ENCODE measurements at regions of chr16 and their contacts with region 1.

Region 1: GRCh38 chr16:75074920-75075687 is 41.5 kb downstream of the LDHD start:
- DNase-seq: peak; percentile 43 to 86 (median 78)
- ATAC-seq: peak; percentile 99
- H3K4me3 Mint-ChIP-seq: peak overlapping the region; percentile 59 to 82 (median 73)
- H3K27ac Mint-ChIP-seq: peak overlapping the region; percentile 66 to 93 (median 82)
- H3K4me1 Mint-ChIP-seq: peaks cover 18 to 62% (median 50%) of the 10 kb centered on the region in 4 donors
- H3K27me3 Mint-ChIP-seq: peaks cover 0 to 3% (median 0%) of the 10 kb centered on the region in 5 donors

Region 2: GRCh38 chr16:75064403-75065148 is 10.5 kb before region 1 on chr16:
- POLR2A ChIA-PET with region 1: interaction called, 11 read pairs
- DNase-seq: peak in 3 of 10 donors; percentile 12 to 23 (median 15)
- ATAC-seq: peak; percentile 56 to 65
- H3K4me3 Mint-ChIP-seq: peak overlapping the region; percentile 43 to 84 (median 72)
- H3K27ac Mint-ChIP-seq: peak overlapping the region in 8 of 10 donors; percentile 77 to 90 (median 84)
- H3K4me1 Mint-ChIP-seq: peaks cover 13 to 52% (median 29%) of the 10 kb centered on the region in 4 donors
- H3K27me3 Mint-ChIP-seq: peaks cover 0 to 3% (median 0%) of the 10 kb centered on the region in 5 donors

Region 3: GRCh38 chr16:75092782-75093185 is 17.7 kb after region 1 on chr16:
- POLR2A ChIA-PET with region 1: no interaction called
- DNase-seq: no peak
- ATAC-seq: no peak
- H3K4me3 Mint-ChIP-seq: no peak overlapping the region
- H3K27ac Mint-ChIP-seq: no peak overlapping the region
- H3K4me1 Mint-ChIP-seq: peaks cover under 1 to 7% (median 6%) of the 10 kb centered on the region in 4 donors
- H3K27me3 Mint-ChIP-seq: peaks cover 0 to 2% (median 0%) of the 10 kb centered on the region in 5 donors

Region 4: GRCh38 chr16:75130150-75130771 is 55.2 kb after region 1 on chr16:
- POLR2A ChIA-PET with region 1: no interaction called
- DNase-seq: no peak
- ATAC-seq: no peak
- H3K4me3 Mint-ChIP-seq: no peak overlapping the region
- H3K27ac Mint-ChIP-seq: no peak overlapping the region
- H3K4me1 Mint-ChIP-seq: peaks cover 3 to 13% (median 12%) of the 10 kb centered on the region in 4 donors
- H3K27me3 Mint-ChIP-seq: peaks cover 4 to 15% (median 8%) of the 10 kb centered on the region in 5 donors

Region 5: DNA sequence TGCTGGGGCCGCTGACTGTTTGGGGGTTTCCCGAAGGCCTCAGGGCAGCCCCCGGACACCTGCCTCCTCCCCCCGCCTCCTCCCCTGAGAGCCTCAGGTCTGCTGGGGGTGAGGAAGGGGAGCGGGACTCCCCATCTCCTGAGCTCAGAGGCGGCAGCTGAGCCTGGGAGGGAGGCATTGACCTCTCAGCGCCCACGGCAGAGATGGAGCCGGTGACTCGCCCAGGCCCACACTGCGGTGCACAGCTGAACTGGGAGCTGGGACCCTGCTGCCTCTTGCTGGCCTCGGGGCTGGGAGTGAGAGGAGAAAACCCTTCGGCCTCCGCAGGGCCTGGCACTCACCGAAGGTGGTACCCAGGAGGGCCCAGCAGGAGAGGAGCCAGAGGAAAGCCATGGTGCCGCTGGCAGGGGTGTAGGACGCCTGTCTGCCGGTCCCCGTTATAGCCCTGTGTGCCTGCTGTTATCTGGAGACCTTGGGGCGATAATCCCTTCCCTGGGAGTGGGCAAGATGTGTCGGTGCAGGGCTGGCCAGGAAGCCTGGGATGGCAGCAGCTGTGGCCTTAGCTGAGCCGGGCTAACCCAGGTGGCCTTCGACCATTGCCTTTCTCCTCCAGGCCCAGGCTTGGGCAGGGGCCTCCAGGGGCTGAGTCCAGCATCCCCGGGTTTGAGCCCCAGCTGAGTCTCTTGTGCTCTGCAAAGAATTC is 131.8 kb after region 1 on chr16 and contains the start of gene CTRB2:
- POLR2A ChIA-PET with region 1: no interaction called
- DNase-seq: no peak
- ATAC-seq: no peak
- H3K4me3 Mint-ChIP-seq: no peak within 1 kb of the TSS
- H3K27ac Mint-ChIP-seq: no peak within 1 kb of the TSS
- H3K4me1 Mint-ChIP-seq: peaks cover 0 to 5% (median under 1%) of the 10 kb centered on the region in 4 donors
- H3K27me3 Mint-ChIP-seq: peaks cover 0 to 2% (median 0%) of the 10 kb centered on the region in 5 donors
- polyA plus RNA-seq, gene CTRB2: not detected